HEK293 (cell line): ENCODE measurements at regions of chr5 and their contacts with region 1.

Region 1: GRCh38 chr5:132883261-132883834 is 9.9 kb downstream of the LEAP2 start:
- H3K4me3 ChIP-seq: no peak overlapping the region
- H3K27ac ChIP-seq: no peak overlapping the region
- H3K4me1 ChIP-seq: peaks cover under 1% of the 10 kb centered on the region; the same call in 1 of the 2 replicates
- CTCF ChIP-seq: 0 out of 2 replicates have a peak, but pooled peaks have one; percentile 34

Region 2: GRCh38 chr5:132829742-132830435 is 53.5 kb before region 1 on chr5:
- CTCF ChIA-PET with region 1: interaction called, 20 read pairs
- POLR2A ChIA-PET with region 1: no interaction called
- H3K4me3 ChIP-seq: peak overlapping the region; percentile 74
- H3K27ac ChIP-seq: peak overlapping the region; percentile 78; the same call in 1 of the 2 replicates
- H3K4me1 ChIP-seq: no peaks in the 10 kb centered on the region
- CTCF ChIP-seq: peak; percentile 96

Region 3: DNA sequence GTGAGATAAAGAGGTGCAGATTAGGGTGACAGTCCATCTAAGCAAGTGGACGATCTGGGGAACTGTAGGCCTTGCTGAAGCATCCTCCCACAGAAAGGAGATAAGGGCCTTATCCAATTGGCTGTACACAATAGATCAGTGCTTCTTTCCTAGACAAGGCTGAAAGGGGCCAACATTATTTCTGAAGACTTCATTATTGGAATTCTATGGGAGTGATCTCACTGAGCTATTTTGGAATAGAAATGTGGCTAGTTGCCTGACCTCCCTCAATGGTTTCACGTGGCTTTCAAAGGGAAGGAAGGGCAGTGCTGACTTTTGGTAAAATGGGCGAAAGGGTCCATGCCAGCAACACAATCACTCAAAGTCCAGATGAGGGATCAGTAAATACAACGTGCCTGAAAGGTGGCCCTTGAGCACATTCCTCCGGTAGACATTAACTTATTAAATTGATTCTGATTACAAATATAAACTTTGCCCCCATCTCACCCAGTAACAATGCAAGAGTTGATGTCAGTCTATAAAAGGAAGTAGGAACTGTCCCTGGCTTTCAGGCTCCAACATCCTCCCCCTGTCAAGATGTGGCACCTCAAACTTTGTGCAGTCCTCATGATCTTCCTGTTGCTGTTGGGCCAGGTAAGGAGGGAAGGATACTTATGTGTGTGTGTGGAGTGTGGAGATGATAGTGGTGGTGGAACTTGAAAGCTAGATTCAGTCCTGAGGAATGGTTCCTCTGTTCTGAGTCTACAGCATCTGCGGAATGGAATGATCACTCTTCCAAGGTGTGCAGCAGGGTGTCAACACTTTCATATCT is 10.0 kb before region 1 on chr5 and contains the start of gene LEAP2:
- CTCF ChIA-PET with region 1: interaction called, 11 read pairs
- POLR2A ChIA-PET with region 1: interaction called, 3 read pairs
- H3K4me3 ChIP-seq: no peak within 1 kb of the TSS
- H3K27ac ChIP-seq: no peak within 1 kb of the TSS
- H3K4me1 ChIP-seq: peaks cover 8% of the 10 kb centered on the region
- CTCF ChIP-seq: no peak

Region 4: GRCh38 chr5:133032852-133033742 is 149.7 kb after region 1 on chr5:
- CTCF ChIA-PET with region 1: no interaction called
- POLR2A ChIA-PET with region 1: no interaction called
- H3K4me3 ChIP-seq: no peak overlapping the region
- H3K27ac ChIP-seq: peak overlapping the region; percentile 29; the same call in 1 of the 2 replicates
- H3K4me1 ChIP-seq: peaks cover 12% of the 10 kb centered on the region
- CTCF ChIP-seq: no peak